ENCODE measurements at regions of chr3 and their contacts with region 1.

Region 1: DNA sequence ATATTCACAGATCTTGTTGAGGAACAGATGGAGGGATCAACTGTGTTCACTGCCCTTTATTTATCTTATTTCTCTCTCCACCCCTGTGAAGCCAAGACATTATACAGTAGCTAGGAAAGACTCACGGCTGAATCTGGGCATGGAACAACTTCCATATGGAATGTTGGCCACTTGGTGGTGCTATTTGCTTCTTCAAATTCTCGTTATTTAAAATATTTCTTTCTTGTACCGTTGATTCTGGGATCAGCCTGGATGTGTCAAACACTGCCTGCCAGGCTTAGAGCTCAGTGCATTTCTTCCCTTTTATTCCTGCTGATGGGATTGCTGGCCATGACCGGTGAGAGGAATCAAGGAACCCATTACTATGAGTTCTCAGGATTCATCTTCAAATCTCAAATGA is 17.5 kb upstream of the GASK1A start:
- DNase-seq: peak in 1 of 2 donors; percentile 71
- H3K4me3 ChIP-seq: no peak overlapping the region
- H3K27ac ChIP-seq: no peak overlapping the region
- H3K4me1 ChIP-seq: no peaks in the 10 kb centered on the region
- H3K27me3 ChIP-seq: no peaks in the 10 kb centered on the region
- CTCF ChIP-seq: peak; percentile 53 to 71 (median 56)

Region 2: GRCh38 chr3:42814914-42815507 is 146.6 kb before region 1 on chr3:
- intact Hi-C with region 1: no loop called
- DNase-seq: no peak
- H3K4me3 ChIP-seq: no peak overlapping the region
- H3K27ac ChIP-seq: no peak overlapping the region
- H3K4me1 ChIP-seq: no peaks in the 10 kb centered on the region
- H3K27me3 ChIP-seq: no peaks in the 10 kb centered on the region
- CTCF ChIP-seq: no peak

Region 3: DNA sequence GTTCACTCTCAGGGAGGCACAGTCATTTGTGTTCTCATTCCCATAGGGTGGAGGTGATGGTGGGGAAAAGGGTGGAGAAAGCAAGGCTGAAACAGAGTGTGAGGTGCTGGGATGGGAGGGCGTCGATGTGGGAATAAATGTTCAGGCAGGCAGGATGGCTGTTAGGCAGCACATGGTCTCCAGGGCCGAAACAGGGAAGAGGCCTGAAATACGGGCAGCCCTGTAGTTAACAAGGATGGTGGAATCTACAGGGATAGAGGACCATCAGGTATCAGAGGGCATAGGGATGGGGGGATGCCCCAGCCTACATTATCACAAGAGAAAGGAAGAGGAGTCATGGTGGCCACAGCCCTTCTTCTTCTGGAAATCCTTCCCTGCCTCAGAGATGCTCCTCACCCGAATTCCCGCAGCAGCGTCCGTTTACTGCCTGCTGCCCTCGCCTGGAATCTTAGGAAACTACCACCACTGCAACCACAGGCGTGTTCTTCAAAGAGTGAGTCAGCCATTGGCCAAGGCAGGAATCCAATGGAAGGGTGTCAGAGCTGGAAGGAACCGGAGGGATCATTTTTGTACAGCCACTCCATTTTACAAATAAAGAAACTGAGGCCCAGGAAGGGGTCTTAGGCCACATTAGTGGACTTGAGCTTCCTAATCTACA is 194.0 kb after region 1 on chr3:
- intact Hi-C with region 1: loop called (anchors 1 kb)
- DNase-seq: peak in 1 of 2 donors; percentile 81
- H3K4me3 ChIP-seq: no peak overlapping the region
- H3K27ac ChIP-seq: no peak overlapping the region
- H3K4me1 ChIP-seq: no peaks in the 10 kb centered on the region
- H3K27me3 ChIP-seq: no peaks in the 10 kb centered on the region
- CTCF ChIP-seq: peak in 2 of 3 experiments; percentile 44 to 66

Measured in ascending aorta (tissue), 2 donors.